HEK293 (cell line): ENCODE measurements at regions of chr17 and their contacts with region 1.

Region 1: GRCh38 chr17:70168977-70169708 is at the start of gene KCNJ2:
- H3K4me3 ChIP-seq: peak within 1 kb of the TSS; percentile 82
- H3K27ac ChIP-seq: peak within 1 kb of the TSS; percentile 88
- H3K4me1 ChIP-seq: peaks cover 12% of the 10 kb centered on the region
- CTCF ChIP-seq: peak; percentile 23; the same call in 1 of the 2 replicates

Region 2: DNA sequence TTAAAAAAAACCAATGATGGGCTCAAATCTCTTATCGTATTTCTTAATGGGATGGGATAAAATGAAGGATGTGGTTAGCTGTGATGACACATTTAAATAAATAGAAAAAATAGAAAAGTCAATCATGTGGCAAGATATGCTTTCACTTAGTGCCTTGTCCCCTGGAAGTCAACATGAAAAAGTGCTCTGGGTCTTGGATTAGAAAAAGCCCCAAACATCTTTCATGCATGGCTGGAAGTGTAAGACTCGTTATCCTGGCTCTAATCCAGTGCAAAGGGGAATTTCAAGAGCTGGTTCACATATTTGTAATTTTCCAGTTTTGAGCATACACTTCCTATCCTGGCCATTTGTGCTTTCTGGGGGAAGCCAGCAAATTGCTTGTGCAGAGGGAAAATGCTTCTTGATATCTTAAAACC is 593.8 kb before region 1 on chr17:
- CTCF ChIA-PET with region 1: interaction called, 16 read pairs
- POLR2A ChIA-PET with region 1: no interaction called
- H3K4me3 ChIP-seq: no peak overlapping the region
- H3K27ac ChIP-seq: peak overlapping the region; percentile 25; the same call in 1 of the 2 replicates
- H3K4me1 ChIP-seq: peaks cover 26% of the 10 kb centered on the region
- CTCF ChIP-seq: no peak

Region 3: DNA sequence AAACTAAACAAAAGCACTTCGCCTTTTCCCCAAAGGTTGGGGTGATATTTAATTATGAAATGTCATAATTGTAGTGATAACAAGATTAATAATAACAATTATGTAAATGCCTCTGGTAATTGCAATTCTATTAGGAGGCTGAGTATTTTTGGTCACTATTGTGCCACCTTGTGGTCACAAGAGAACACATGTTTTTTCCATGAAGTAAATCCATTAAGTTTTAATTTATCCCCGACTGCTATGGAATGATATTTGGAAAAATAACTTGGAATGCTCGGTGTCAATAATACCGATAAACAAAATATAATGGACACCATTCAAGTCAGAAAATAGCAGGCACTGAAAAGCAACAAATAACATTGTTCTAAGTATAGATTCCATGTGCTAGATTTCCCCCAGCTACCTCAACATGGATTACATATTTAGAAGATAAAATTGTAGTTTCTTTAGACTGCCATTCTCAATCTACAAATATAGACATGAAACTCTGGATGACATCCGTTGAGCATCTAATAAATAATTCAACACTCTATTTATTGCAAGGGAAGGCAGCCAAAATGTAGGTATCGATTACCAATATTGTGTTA is 24.8 kb before region 1 on chr17:
- CTCF ChIA-PET with region 1: interaction called, 10 read pairs
- POLR2A ChIA-PET with region 1: no interaction called
- H3K4me3 ChIP-seq: no peak overlapping the region
- H3K27ac ChIP-seq: no peak overlapping the region
- H3K4me1 ChIP-seq: no peaks in the 10 kb centered on the region
- CTCF ChIP-seq: peak; percentile 23; the same call in 1 of the 2 replicates

Region 4: GRCh38 chr17:70187383-70187782 is 18.2 kb after region 1 on chr17:
- CTCF ChIA-PET with region 1: no interaction called
- POLR2A ChIA-PET with region 1: no interaction called
- H3K4me3 ChIP-seq: no peak overlapping the region
- H3K27ac ChIP-seq: no peak overlapping the region
- H3K4me1 ChIP-seq: peaks cover 12% of the 10 kb centered on the region
- CTCF ChIP-seq: no peak

Region 5: GRCh38 chr17:70215656-70216055 is 46.5 kb after region 1 on chr17:
- CTCF ChIA-PET with region 1: no interaction called
- POLR2A ChIA-PET with region 1: no interaction called
- H3K4me3 ChIP-seq: no peak overlapping the region
- H3K27ac ChIP-seq: no peak overlapping the region
- H3K4me1 ChIP-seq: no peaks in the 10 kb centered on the region
- CTCF ChIP-seq: no peak